Thyroid gland (tissue), 4 donors: ENCODE measurements at regions of chr22 and their contacts with region 1.

Region 1: DNA sequence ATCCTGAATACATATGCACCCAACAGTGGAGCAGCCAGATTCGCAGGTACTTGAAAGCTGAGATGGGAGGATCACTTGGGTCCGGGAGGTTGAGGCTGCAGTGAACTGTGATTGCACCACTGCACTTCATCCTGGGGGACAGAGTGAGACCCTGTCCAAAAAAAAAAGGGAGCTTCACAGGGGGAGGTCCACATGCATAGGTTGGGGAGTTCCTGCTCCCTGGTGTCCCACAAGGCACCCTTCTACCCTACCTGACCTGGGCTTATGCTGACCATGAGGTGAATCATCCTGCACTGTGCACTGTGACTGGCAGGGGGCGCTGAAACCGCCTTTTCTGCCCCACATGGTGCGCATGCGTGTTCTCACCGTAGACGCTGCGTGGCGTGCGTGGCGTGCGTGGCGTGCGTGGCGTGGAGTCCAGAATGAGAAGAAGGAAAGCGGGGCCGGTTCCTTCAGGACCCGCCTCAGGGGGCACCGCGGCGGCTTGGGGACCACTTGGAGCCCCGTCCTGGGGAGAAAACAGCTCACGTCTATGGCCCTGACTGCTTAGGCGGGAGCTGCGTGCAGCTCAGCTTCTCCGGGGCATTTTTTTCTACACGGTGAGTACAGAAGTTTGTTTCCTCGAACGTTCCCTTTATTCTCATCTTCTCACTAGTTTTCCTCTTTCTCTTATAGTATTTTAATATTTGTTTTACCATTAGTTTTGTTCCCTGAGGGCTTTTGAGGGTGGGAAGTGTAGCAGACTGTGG is 116.6 kb upstream of the GRK3 start:
- DNase-seq: peak; percentile 83 to 90
- H3K4me3 ChIP-seq: peak overlapping the region; percentile 34 to 86 (median 66)
- H3K27ac ChIP-seq: peak overlapping the region; percentile 51 to 79 (median 78)
- H3K4me1 ChIP-seq: peaks cover 25 to 37% of the 10 kb centered on the region in 2 donors
- H3K27me3 ChIP-seq: no peaks in the 10 kb centered on the region
- CTCF ChIP-seq: peak; percentile 74 to 97 (median 94)
- POLR2A ChIP-seq: peak in 1 of 2 donors; percentile 42

Region 2: GRCh38 chr22:25334162-25334490 is 113.7 kb before region 1 on chr22:
- intact Hi-C with region 1: no loop called
- DNase-seq: peak in 1 of 2 donors; percentile 32
- H3K4me3 ChIP-seq: no peak overlapping the region
- H3K27ac ChIP-seq: no peak overlapping the region
- H3K4me1 ChIP-seq: no peaks in the 10 kb centered on the region
- H3K27me3 ChIP-seq: no peaks in the 10 kb centered on the region
- CTCF ChIP-seq: peak in 3 of 6 experiments; percentile 20 to 28 (median 25)
- POLR2A ChIP-seq: no peak

Region 3: GRCh38 chr22:25362215-25362882 is 85.5 kb before region 1 on chr22:
- intact Hi-C with region 1: loop called (anchors 10 kb)
- DNase-seq: peak; percentile 67 to 72
- H3K4me3 ChIP-seq: no peak overlapping the region
- H3K27ac ChIP-seq: peak overlapping the region in 2 of 3 donors; percentile 36 to 43
- H3K4me1 ChIP-seq: peaks cover 11 to 36% of the 10 kb centered on the region in 2 donors
- H3K27me3 ChIP-seq: no peaks in the 10 kb centered on the region
- CTCF ChIP-seq: peak; percentile 77 to 89 (median 86)
- POLR2A ChIP-seq: no peak